IMR-90 (cell line): ENCODE measurements at regions of chr4 and their contacts with region 1.

Region 1: DNA sequence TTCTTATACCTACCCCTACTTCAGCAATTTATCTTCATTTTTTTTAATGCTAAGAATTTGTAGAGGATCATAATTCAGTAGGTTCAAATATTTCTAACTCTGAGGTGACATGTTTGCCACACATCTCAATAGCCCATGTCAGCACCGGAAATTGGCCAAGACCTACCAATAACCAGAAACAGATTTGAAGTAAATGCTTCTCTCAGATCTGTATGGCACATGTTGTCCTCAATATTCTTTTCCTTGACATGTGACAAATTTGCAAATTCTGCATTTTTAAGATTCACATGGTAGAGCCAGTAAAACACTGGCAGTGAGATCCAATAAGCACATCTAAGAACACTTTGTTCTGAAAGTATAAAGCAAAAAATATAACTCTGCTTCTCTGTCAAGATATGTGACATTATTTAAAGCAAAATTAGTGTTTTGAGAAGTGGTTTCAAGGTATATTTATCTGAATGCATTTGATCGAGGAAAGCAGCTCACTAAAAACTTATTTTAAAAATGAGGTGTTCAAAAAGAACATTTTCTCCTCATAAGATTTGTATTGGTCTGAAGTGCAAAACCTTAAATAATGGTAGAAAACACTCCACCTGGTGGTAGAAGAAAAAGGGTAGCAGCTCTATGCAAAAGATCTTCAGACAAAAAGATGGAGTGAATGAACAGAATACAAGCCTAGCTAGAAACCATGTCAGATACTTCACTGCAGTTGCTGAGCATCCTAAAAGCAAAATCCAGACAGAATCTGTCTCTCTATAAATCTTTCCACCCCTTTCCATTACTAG is 513.8 kb upstream of the FAM241A start:
- DNase-seq: peak; percentile 37
- ATAC-seq: no peak
- H3K4me3 ChIP-seq: no peak overlapping the region
- H3K27ac ChIP-seq: no peak overlapping the region
- H3K4me1 ChIP-seq: no peaks in the 10 kb centered on the region
- H3K27me3 ChIP-seq: no peaks in the 10 kb centered on the region
- CTCF ChIP-seq: peak; percentile 50
- POLR2A ChIP-seq: no peak
- RAD21 ChIP-seq: peak; percentile 43

Region 2: GRCh38 chr4:109998867-109999584 is 1632.4 kb before region 1 on chr4:
- CTCF ChIA-PET with region 1: no interaction called
- POLR2A ChIA-PET with region 1: no interaction called
- dilution Hi-C with region 1: no loop called
- in situ Hi-C with region 1: no loop called
- intact Hi-C with region 1: loop called (anchors 2 kb)
- DNase-seq: peak; percentile 61
- ATAC-seq: peak; percentile 73
- H3K4me3 ChIP-seq: no peak overlapping the region
- H3K27ac ChIP-seq: no peak overlapping the region
- H3K4me1 ChIP-seq: no peaks in the 10 kb centered on the region
- H3K27me3 ChIP-seq: peaks cover 2% of the 10 kb centered on the region; the same call in 1 of the 2 replicates
- CTCF ChIP-seq: peak; percentile 91
- POLR2A ChIP-seq: no peak
- RAD21 ChIP-seq: peak; percentile 86

Region 3: DNA sequence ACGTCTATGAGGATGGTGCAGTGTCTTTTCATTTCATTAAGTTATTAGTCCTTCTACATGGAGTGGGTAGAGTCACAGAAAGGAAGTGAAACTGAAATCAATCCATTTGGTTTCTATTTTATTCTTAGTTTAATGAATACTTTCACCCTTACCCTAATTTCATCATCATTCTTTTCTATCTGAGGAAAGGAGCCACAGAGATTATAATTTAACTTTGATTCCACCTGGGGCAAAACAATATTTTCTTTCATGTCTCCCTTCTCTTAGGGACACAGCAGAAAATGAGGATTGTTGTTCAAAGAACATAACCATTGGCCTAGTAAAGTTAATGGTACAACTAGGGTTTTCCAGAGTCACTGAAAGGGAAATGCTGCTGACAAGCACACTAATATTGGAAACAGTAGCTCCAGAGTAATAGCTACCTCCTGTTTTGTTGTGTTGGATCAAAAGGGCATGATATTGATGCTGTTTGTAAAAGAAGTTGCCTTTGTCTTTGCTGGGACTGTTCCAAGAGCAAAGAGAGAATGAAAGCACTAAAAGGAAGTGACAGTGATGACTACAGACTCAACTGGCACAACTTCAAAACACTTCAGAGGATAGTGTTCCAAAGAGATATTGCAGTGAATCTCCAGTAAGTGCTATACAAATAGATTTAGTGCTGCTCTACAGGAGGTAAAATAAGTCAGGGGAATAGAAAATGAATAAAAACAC is 761.4 kb before region 1 on chr4:
- CTCF ChIA-PET with region 1: no interaction called
- POLR2A ChIA-PET with region 1: no interaction called
- dilution Hi-C with region 1: no loop called
- in situ Hi-C with region 1: no loop called
- intact Hi-C with region 1: loop called (anchors 10 kb)
- DNase-seq: peak; percentile 25
- ATAC-seq: no peak
- H3K4me3 ChIP-seq: no peak overlapping the region
- H3K27ac ChIP-seq: no peak overlapping the region
- H3K4me1 ChIP-seq: peaks cover 2% of the 10 kb centered on the region
- H3K27me3 ChIP-seq: no peaks in the 10 kb centered on the region
- CTCF ChIP-seq: no peak
- POLR2A ChIP-seq: no peak
- RAD21 ChIP-seq: no peak

Region 4: DNA sequence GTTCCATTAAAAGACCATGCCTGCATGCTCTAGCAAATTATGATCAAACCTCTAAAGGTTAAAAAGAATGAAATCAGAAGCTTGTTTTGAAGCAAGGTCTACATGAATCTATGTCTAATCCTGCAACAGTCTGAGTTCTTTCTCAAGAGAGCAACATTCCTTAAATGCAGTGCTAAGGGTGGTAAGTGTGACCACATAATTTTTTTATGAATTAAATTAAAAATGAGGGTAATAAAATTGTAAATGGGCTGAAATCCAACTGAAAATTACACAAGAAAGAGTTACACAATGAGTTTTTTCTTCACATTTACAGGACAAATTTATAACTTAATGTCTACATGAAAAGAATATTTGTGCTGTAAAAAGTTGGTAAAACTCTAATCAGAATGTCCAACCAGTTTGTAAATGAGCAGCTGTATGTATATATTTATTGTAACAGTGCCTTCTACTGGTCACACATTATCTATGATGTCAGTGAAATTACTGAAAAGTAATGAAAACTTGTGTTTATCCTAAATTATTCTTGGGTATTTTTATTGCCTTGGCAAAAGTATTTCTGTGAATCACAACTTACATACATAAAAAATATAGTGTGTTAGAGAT is 672.3 kb before region 1 on chr4:
- CTCF ChIA-PET with region 1: no interaction called
- POLR2A ChIA-PET with region 1: no interaction called
- dilution Hi-C with region 1: no loop called
- in situ Hi-C with region 1: loop called (anchors 25 kb)
- intact Hi-C with region 1: loop called (anchors 5 kb)
- DNase-seq: peak; percentile 30
- ATAC-seq: peak; percentile 66; the same call in 1 of the 2 replicates
- H3K4me3 ChIP-seq: no peak overlapping the region
- H3K27ac ChIP-seq: no peak overlapping the region
- H3K4me1 ChIP-seq: no peaks in the 10 kb centered on the region
- H3K27me3 ChIP-seq: peaks cover 2% of the 10 kb centered on the region; the same call in 1 of the 2 replicates
- CTCF ChIP-seq: peak; percentile 50
- POLR2A ChIP-seq: no peak
- RAD21 ChIP-seq: peak; percentile 48

Region 5: DNA sequence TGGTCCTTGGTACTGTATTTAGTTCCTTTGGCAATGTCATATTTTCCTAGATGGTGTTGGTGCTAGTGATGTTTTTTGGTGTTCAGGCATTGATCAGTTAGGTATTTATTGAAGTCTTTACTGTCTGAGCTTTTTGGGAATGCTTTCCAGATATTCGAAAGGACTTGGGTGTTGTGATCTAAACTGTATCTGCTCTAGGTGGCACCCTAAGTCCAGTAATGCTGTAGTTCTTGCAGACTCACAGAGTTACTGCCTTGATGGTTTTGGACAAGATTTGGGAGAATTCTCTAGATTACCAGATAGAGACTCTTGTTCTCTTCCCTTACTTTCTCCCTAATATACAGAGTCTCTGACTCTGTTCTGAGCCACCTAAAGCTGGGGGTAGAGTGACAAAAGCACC is 495.0 kb before region 1 on chr4:
- CTCF ChIA-PET with region 1: interaction called, 4 read pairs
- POLR2A ChIA-PET with region 1: no interaction called
- dilution Hi-C with region 1: no loop called
- in situ Hi-C with region 1: loop called (anchors 5 kb)
- intact Hi-C with region 1: loop called (anchors 1 kb)
- DNase-seq: peak; percentile 59
- ATAC-seq: peak; percentile 73
- H3K4me3 ChIP-seq: no peak overlapping the region
- H3K27ac ChIP-seq: no peak overlapping the region
- H3K4me1 ChIP-seq: no peaks in the 10 kb centered on the region
- H3K27me3 ChIP-seq: no peaks in the 10 kb centered on the region
- CTCF ChIP-seq: peak; percentile 60
- POLR2A ChIP-seq: no peak
- RAD21 ChIP-seq: peak; percentile 75

Region 6: DNA sequence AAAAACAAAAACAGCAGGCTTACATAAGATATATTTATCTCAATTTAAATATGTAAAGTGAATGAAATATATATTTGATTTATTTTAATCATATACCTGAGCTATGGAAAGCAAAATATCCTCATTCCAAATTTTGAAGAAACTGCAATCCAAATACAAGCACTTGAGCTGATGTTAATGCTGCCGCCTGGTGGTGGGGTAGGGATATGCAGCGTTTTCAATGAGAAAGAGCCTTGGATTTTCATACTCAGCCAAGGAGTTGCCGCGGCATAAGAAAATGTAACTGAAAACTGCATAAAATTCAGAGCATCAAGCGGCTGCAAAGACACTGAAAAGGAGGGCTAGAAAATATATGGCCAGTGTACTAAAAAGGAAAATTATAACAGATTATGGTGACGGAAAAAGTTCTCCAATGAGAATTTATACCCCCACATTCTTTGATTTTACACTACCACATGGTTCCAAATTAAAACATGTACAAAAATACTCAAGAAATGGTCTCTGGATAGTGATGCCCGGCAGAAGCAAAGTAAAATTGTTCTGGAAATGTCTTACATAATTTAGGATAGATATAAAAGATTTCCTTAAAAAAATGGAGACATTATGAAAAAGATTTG is 348.2 kb before region 1 on chr4:
- CTCF ChIA-PET with region 1: no interaction called
- POLR2A ChIA-PET with region 1: no interaction called
- dilution Hi-C with region 1: no loop called
- in situ Hi-C with region 1: no loop called
- intact Hi-C with region 1: loop called (anchors 5 kb)
- DNase-seq: peak; percentile 57
- ATAC-seq: 0 out of 2 replicates have a peak, but pooled peaks have one; percentile 44
- H3K4me3 ChIP-seq: no peak overlapping the region
- H3K27ac ChIP-seq: no peak overlapping the region
- H3K4me1 ChIP-seq: no peaks in the 10 kb centered on the region
- H3K27me3 ChIP-seq: no peaks in the 10 kb centered on the region
- CTCF ChIP-seq: peak; percentile 70
- POLR2A ChIP-seq: no peak
- RAD21 ChIP-seq: peak; percentile 60

Region 7: GRCh38 chr4:111475001-111475400 is 156.4 kb before region 1 on chr4:
- CTCF ChIA-PET with region 1: no interaction called
- POLR2A ChIA-PET with region 1: no interaction called
- dilution Hi-C with region 1: no loop called
- in situ Hi-C with region 1: no loop called
- intact Hi-C with region 1: loop called (anchors 1 kb)
- DNase-seq: peak; percentile 39
- ATAC-seq: no peak
- H3K4me3 ChIP-seq: no peak overlapping the region
- H3K27ac ChIP-seq: no peak overlapping the region
- H3K4me1 ChIP-seq: no peaks in the 10 kb centered on the region
- H3K27me3 ChIP-seq: no peaks in the 10 kb centered on the region
- CTCF ChIP-seq: peak; percentile 38
- POLR2A ChIP-seq: no peak
- RAD21 ChIP-seq: peak; percentile 53